ENCODE measurements at regions of chr2 and their contacts with region 1.

Region 1: GRCh38 chr2:5915881-5916310 is 223.7 kb downstream of the SOX11 start:
- DNase-seq: no peak
- CTCF ChIP-seq: peak; percentile 32

Region 2: GRCh38 chr2:5867056-5867455 is 48.8 kb before region 1 on chr2:
- CTCF ChIA-PET with region 1: no interaction called
- POLR2A ChIA-PET with region 1: no interaction called
- DNase-seq: no peak
- CTCF ChIP-seq: no peak

Region 3: GRCh38 chr2:5898667-5899066 is 17.2 kb before region 1 on chr2:
- CTCF ChIA-PET with region 1: interaction called, 19 read pairs
- POLR2A ChIA-PET with region 1: no interaction called
- DNase-seq: no peak
- CTCF ChIP-seq: no peak

Region 4: GRCh38 chr2:5959836-5960820 is 44.2 kb after region 1 on chr2:
- CTCF ChIA-PET with region 1: no interaction called
- POLR2A ChIA-PET with region 1: no interaction called
- DNase-seq: no peak
- CTCF ChIP-seq: no peak

Measured in GM10248 (cell line).